Activated CD8-positive, alpha-beta T cell treated with anti-CD3 and anti-CD28 coated beads for 36 hours (primary cell): ENCODE measurements at regions of chr20 and their contacts with region 1.

Region 1: DNA sequence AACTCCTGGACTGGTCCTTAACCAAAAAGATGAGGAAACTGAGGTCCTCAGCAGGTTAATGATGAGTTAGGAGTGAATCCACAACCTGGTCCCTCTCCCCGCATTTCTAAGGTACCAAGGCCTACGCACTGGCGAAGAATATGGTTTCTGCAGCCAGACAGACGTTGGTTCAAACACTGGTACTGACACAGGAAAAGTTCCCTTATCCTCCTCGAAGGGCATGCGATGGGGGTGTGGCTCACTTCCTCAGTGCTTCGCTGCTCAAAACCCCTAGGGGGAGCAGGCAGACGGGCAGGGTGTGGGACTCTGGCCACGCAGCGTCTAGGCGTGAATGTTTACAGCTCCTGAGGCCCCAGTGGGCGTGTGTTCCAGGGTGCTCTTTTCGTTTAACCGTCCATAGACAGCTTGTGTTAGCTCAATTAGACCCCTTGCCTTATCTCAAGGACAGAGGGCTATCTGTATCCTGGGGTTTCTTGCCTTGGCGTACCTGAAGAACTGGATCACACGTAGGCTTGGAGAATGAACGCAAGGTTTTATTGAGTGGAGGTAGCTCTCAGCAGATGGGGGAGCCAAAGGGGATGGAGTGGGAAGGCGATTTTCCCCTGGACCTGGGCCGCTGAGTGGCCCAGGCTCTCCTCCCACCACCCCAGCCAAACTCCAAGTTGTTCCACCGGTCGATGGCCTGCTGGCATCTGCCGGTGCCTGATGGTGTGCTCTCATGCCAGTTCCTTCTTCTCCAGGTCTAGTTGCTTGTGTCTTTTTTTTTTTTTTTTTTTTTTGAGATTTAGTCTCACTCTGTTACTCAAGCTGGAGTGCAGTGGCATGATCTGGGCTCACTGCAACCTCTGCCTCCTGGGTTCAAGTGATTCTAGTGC is 31.8 kb upstream of the PTPN1 start:
- DNase-seq: peak; percentile 85
- ATAC-seq: peak; percentile 99
- H3K4me3 Mint-ChIP-seq: no peak overlapping the region
- H3K27ac Mint-ChIP-seq: no peak overlapping the region
- H3K4me1 Mint-ChIP-seq: peaks cover 15% of the 10 kb centered on the region
- H3K27me3 Mint-ChIP-seq: no peaks in the 10 kb centered on the region
- CTCF ChIP-seq: peak; percentile 81

Region 2: DNA sequence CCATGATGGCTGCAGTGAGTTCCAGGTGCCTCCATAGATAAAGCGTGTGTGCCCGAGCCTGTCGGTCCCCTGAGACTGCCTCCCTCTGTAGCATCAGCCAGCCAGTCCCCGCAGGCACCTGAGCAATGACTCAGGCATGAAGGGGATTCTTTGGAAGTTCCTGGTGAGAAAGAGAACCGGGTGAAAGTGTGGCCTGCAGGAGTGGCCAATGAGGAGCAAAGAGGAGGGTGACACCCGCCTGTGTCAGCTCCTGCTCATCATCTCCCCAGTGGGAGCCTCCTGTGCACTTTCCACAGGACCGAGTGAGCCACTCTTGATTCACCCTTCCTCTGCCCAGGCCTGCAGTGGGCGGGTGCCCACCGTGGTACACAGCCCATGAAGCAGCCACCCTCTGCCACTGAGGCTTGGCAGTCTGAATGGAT is 39.4 kb before region 1 on chr20:
- CTCF ChIA-PET with region 1: no interaction called
- POLR2A ChIA-PET with region 1: no interaction called
- intact Hi-C with region 1: no loop called
- DNase-seq: no peak
- ATAC-seq: no peak
- H3K4me3 Mint-ChIP-seq: no peak overlapping the region
- H3K27ac Mint-ChIP-seq: no peak overlapping the region
- H3K4me1 Mint-ChIP-seq: peaks cover 14% of the 10 kb centered on the region
- H3K27me3 Mint-ChIP-seq: no peaks in the 10 kb centered on the region
- CTCF ChIP-seq: no peak

Region 3: GRCh38 chr20:50491926-50492634 is 13.7 kb after region 1 on chr20:
- CTCF ChIA-PET with region 1: interaction called, 14 read pairs
- POLR2A ChIA-PET with region 1: interaction called, 7 read pairs
- intact Hi-C with region 1: no loop called
- DNase-seq: no peak
- ATAC-seq: no peak
- H3K4me3 Mint-ChIP-seq: no peak overlapping the region
- H3K27ac Mint-ChIP-seq: peak overlapping the region; percentile 66
- H3K4me1 Mint-ChIP-seq: peaks cover 30% of the 10 kb centered on the region
- H3K27me3 Mint-ChIP-seq: no peaks in the 10 kb centered on the region
- CTCF ChIP-seq: no peak

Region 4: DNA sequence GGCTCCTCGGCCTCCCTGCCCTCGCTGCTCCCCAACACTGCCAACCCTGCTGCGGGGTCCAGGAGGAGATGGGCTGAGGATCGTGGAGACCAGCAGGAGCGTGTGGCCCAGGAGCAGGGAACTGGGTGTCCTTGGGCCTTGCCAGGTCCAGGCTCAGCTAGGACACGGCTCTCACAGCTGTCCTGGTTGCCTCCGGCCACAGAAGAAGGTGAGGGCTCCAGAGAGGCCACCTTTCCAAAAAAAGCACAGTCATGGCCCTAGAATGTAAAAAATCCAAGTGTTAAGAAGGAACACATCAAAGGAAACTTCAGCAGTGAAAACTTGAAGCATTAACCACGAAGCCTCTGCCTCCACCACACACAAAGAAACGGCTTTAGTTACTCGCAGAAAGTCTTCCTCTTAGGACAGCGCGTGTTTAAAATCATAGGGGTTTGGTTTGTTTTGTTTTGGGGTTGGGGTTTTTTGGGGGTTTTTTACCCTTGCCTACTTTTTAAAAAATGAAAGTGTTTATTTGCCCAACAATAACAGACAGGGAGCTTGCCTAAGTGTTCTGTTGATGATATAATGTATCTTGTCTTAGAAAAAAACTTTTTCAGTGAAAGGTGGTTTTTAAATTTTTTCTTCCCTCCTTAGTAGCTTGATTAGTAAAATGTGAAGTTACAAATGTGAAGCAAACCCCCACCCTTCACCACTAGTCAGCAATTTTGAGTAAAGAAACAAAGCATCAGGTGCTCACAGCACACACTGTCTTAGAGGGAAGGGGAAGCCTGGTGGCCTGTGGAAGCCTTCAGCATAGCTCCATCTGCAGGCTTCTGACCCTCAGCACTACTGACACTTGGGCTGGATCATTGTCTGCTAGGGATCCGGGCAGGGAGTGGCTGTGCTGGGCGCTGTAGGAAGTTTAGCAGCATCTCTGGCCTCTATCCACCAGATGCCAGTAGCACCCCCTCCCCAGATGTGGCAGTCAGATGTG is 91.8 kb after region 1 on chr20:
- CTCF ChIA-PET with region 1: interaction called, 108 read pairs
- POLR2A ChIA-PET with region 1: no interaction called
- intact Hi-C with region 1: no loop called
- DNase-seq: peak; percentile 71
- ATAC-seq: peak; percentile 93
- H3K4me3 Mint-ChIP-seq: no peak overlapping the region
- H3K27ac Mint-ChIP-seq: peak overlapping the region; percentile 78
- H3K4me1 Mint-ChIP-seq: peaks cover 58% of the 10 kb centered on the region
- H3K27me3 Mint-ChIP-seq: no peaks in the 10 kb centered on the region
- CTCF ChIP-seq: peak; percentile 46